BJ (cell line): ENCODE measurements at regions of chr16 and their contacts with region 1.

Region 1: DNA sequence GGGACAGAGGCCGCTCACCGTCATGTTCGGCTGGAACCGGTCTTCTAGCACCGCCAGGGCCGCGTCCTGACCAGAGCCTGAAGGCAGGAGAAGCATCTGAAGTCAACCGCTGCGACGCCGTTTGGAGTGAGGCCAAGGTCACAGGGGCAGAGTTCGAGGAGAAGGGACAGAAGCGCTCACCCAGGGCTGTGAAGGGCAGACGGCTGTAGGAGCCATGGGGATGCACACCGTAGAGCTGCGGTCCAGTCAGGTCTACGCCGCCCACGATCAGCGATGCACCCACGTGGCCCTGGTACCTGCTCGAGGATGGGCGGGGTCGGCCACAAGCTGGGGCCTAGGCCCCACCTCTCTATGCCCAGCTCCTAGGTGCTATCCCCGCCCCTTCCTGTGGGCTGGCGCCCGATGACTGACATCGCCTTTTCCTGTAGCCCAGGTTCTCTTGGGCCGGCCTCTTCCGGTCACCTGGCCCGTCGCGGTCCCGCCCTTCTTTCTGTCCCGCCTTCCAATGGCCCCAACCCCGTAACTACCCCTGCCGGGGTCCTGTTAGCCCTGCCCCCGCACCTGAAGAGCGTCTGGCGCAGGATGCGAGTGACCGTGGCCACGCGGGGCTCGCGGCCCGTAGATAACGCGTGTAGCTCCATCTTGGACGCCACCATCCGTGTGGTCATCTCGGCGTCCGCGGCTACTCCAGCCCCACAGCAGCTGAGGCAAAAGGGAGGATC is 1.1 kb downstream of the PSMB10 start:
- DNase-seq: peak; percentile 59
- H3K4me3 ChIP-seq: peak overlapping the region; percentile 84
- H3K27me3 ChIP-seq: no peaks in the 10 kb centered on the region
- CTCF ChIP-seq: no peak

Region 2: DNA sequence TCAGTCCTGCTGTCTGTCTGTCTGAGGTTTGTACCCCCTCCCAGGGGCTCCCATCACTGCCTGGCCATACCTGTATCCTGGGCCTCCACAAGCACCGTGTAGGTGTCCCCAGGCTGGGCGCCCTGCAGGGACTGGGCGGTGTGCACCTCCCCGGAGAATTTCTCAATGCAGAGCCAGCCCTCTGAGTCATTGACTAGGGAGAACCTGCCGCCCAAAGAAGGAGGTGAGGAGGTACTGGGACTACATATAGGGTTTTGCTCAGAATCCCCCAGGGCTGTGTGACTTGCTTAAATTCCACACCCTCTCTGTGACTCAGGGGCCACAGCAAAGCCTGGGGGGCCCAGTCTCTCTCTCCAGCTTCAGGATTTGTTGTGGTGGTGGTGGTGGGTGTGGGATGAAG is 1024.5 kb before region 1 on chr16:
- CTCF ChIA-PET with region 1: no interaction called
- POLR2A ChIA-PET with region 1: no interaction called
- DNase-seq: no peak
- H3K4me3 ChIP-seq: no peak overlapping the region
- H3K27me3 ChIP-seq: peaks cover 2% of the 10 kb centered on the region
- CTCF ChIP-seq: no peak

Region 3: GRCh38 chr16:67846320-67847063 is 89.1 kb before region 1 on chr16 and contains the start of gene NUTF2:
- CTCF ChIA-PET with region 1: interaction called, 17 read pairs
- POLR2A ChIA-PET with region 1: no interaction called
- DNase-seq: peak; percentile 52
- H3K4me3 ChIP-seq: peak within 1 kb of the TSS; percentile 69
- H3K27me3 ChIP-seq: no peaks in the 10 kb centered on the region
- CTCF ChIP-seq: no peak
- polyA plus RNA-seq, gene NUTF2: 173 and 230 TPM in 2 replicates